IMR-90 (cell line): ENCODE measurements at regions of chr17 and their contacts with region 1.

Region 1: DNA sequence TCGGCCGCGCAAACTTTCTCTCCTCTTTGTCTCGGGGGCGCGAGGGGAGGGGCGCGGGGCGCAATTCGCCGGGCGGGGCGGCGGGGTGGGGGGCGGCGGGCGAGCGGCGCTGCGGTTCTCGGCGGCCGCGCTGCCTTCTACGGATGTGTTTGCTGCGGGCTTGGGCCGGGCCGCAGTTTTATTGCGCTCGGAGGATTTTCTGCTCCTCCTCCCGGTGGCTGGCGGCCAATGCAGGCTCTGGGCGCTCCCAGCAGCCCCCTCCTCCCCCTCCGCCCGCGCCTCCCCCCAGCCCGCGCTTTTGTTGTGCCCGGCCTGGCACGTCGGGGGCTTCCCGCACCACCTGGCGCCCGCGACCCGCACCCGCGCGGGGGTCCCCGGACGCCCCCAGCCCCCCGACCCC is at the start of gene TIMP2:
- DNase-seq: peak; percentile 83
- ATAC-seq: peak; percentile 77
- H3K4me3 ChIP-seq: peak within 1 kb of the TSS; percentile 89
- H3K27ac ChIP-seq: peak within 1 kb of the TSS; percentile 90
- H3K4me1 ChIP-seq: peaks cover 22% of the 10 kb centered on the region
- H3K27me3 ChIP-seq: no peaks in the 10 kb centered on the region
- CTCF ChIP-seq: 0 out of 2 replicates have a peak, but pooled peaks have one; percentile 2
- POLR2A ChIP-seq: peak; percentile 95
- RAD21 ChIP-seq: peak; percentile 3; the same call in 1 of the 2 replicates
- total RNA-seq, gene TIMP2: 43.9 and 48.6 TPM in 2 replicates

Region 2: GRCh38 chr17:78745407-78746088 is 179.7 kb before region 1 on chr17:
- CTCF ChIA-PET with region 1: no interaction called
- POLR2A ChIA-PET with region 1: interaction called, 15 read pairs
- dilution Hi-C with region 1: no loop called
- in situ Hi-C with region 1: no loop called
- intact Hi-C with region 1: no loop called
- DNase-seq: peak; percentile 49
- ATAC-seq: peak; percentile 42; the same call in 1 of the 2 replicates
- H3K4me3 ChIP-seq: no peak overlapping the region
- H3K27ac ChIP-seq: no peak overlapping the region
- H3K4me1 ChIP-seq: peaks cover 9% of the 10 kb centered on the region
- H3K27me3 ChIP-seq: no peaks in the 10 kb centered on the region
- CTCF ChIP-seq: peak; percentile 56
- POLR2A ChIP-seq: no peak
- RAD21 ChIP-seq: peak; percentile 35

Region 3: DNA sequence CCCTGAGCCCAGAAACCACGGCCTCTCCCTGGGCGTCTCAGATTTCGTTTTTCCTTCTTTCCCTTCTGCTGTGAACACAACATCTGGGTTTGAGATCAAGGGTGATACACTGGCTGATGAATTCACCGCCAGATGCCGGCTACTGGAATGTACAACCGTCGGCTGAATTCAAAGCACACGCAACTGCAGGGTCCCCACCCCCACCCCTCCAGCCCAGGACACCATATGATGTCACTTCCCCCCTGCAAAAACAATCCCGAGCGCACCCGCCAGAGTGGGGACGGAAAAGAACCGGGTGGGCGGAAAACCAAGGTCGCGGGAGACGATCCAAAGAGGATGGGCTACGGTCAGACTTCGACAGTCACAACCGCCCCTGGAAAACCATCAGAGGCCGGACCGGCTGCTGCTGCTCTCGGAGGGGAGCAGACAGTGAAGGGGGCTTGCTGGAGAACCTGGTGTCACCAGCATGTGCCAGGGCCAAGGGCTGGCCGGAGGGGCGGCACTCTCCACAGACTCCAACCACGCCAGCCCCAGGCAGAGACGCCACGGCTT is 45.5 kb before region 1 on chr17:
- CTCF ChIA-PET with region 1: no interaction called
- POLR2A ChIA-PET with region 1: no interaction called
- dilution Hi-C with region 1: no loop called
- in situ Hi-C with region 1: no loop called
- intact Hi-C with region 1: loop called (anchors 1 kb)
- DNase-seq: peak; percentile 98
- ATAC-seq: peak; percentile 47
- H3K4me3 ChIP-seq: no peak overlapping the region
- H3K27ac ChIP-seq: peak overlapping the region; percentile 92
- H3K4me1 ChIP-seq: peaks cover 55% of the 10 kb centered on the region
- H3K27me3 ChIP-seq: no peaks in the 10 kb centered on the region
- CTCF ChIP-seq: no peak
- POLR2A ChIP-seq: peak; percentile 35; the same call in 1 of the 2 replicates
- RAD21 ChIP-seq: peak; percentile 23; the same call in 1 of the 2 replicates

Region 4: GRCh38 chr17:78940708-78941107 is 15.5 kb after region 1 on chr17:
- CTCF ChIA-PET with region 1: no interaction called
- POLR2A ChIA-PET with region 1: no interaction called
- dilution Hi-C with region 1: no loop called
- in situ Hi-C with region 1: no loop called
- intact Hi-C with region 1: no loop called
- DNase-seq: peak; percentile 54
- ATAC-seq: no peak
- H3K4me3 ChIP-seq: no peak overlapping the region
- H3K27ac ChIP-seq: no peak overlapping the region
- H3K4me1 ChIP-seq: peaks cover 15% of the 10 kb centered on the region
- H3K27me3 ChIP-seq: no peaks in the 10 kb centered on the region; the same call in 1 of the 2 replicates
- CTCF ChIP-seq: no peak
- POLR2A ChIP-seq: no peak
- RAD21 ChIP-seq: no peak

Region 5: DNA sequence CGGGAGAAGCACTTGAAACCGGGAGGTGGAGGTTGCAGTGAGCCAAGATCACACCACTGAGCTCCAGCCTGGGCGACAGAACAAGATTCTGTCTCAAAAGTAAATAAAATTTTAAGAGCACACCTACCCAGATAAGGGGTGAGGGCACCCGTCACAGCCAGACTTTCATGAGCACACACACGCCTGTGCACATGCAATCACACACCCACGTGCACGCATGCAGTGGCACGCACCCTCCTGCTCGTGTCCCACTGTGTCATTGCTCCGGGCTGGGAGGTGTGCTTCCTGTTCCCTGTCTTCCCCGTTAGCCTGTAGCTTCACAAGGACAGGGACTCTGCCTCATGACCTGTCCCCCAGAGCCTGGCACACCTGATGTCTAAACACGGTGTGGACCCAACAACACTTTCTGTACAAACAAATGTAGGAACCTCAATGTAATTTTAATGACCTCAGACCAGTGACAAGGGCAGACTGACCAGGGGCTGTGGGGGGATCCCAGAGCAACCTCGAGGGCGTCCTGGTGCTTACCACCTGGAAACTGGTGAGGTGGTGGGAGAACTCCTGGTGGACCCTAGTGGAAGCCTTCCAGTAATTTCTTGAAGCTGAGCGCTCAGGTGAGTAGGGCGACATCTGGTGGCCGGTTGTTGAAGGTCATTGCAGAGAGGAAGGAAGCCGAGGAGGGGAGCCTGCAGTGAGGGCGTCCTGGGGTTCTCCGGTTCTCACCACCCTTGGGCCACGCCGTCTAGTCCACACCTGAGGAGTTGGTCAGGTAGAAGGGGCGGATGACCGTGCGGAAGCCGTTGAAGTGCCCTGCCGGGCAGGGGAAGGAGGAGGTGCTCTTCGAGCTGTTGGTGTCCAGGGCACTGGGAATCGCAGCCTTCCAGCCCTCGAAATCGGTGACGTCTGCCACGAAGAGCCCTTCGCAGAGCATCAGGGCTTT is 45.9 kb after region 1 on chr17:
- CTCF ChIA-PET with region 1: interaction called, 3 read pairs
- POLR2A ChIA-PET with region 1: no interaction called
- dilution Hi-C with region 1: no loop called
- in situ Hi-C with region 1: no loop called
- intact Hi-C with region 1: loop called (anchors 2 kb)
- DNase-seq: peak; percentile 72
- ATAC-seq: peak; percentile 37
- H3K4me3 ChIP-seq: no peak overlapping the region
- H3K27ac ChIP-seq: no peak overlapping the region; the same call in 1 of the 2 replicates
- H3K4me1 ChIP-seq: peaks cover 19% of the 10 kb centered on the region
- H3K27me3 ChIP-seq: no peaks in the 10 kb centered on the region
- CTCF ChIP-seq: peak; percentile 90
- POLR2A ChIP-seq: no peak
- RAD21 ChIP-seq: peak; percentile 94

Region 6: GRCh38 chr17:79065105-79065670 is 140.0 kb after region 1 on chr17:
- CTCF ChIA-PET with region 1: no interaction called
- POLR2A ChIA-PET with region 1: no interaction called
- dilution Hi-C with region 1: no loop called
- in situ Hi-C with region 1: no loop called
- intact Hi-C with region 1: no loop called
- DNase-seq: peak; percentile 32
- ATAC-seq: peak; percentile 83; the same call in 1 of the 2 replicates
- H3K4me3 ChIP-seq: no peak overlapping the region
- H3K27ac ChIP-seq: no peak overlapping the region
- H3K4me1 ChIP-seq: no peaks in the 10 kb centered on the region
- H3K27me3 ChIP-seq: peaks cover 19% of the 10 kb centered on the region
- CTCF ChIP-seq: peak; percentile 61
- POLR2A ChIP-seq: no peak
- RAD21 ChIP-seq: peak; percentile 54